ENCODE measurements at regions of chr3 and their contacts with region 1.

Region 1: DNA sequence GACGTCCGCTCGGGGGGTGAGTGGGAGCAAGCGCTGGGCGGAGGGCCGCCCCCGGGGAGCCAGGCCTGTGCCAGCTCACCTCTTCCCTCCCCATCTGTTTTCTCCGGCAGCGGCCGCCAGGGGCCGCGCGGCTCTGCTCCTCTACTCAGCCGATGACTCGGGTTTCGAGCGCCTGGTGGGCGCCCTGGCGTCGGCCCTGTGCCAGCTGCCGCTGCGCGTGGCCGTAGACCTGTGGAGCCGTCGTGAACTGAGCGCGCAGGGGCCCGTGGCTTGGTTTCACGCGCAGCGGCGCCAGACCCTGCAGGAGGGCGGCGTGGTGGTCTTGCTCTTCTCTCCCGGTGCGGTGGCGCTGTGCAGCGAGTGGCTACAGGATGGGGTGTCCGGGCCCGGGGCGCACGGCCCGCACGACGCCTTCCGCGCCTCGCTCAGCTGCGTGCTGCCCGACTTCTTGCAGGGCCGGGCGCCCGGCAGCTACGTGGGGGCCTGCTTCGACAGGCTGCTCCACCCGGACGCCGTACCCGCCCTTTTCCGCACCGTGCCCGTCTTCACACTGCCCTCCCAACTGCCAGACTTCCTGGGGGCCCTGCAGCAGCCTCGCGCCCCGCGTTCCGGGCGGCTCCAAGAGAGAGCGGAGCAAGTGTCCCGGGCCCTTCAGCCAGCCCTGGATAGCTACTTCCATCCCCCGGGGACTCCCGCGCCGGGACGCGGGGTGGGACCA is 632 bp upstream of the CRELD1 start:
- DNase-seq: peak; percentile 88
- CTCF ChIP-seq: peak; percentile 83

Region 2: GRCh38 chr3:9915254-9916141 is 17.5 kb before region 1 on chr3:
- CTCF ChIA-PET with region 1: interaction called, 43 read pairs
- POLR2A ChIA-PET with region 1: interaction called, 3 read pairs
- DNase-seq: no peak
- CTCF ChIP-seq: peak; percentile 45

Region 3: GRCh38 chr3:9951962-9952805 is 19.2 kb after region 1 on chr3 and contains the start of gene PRRT3:
- CTCF ChIA-PET with region 1: interaction called, 33 read pairs
- POLR2A ChIA-PET with region 1: interaction called, 14 read pairs
- DNase-seq: peak; percentile 83
- CTCF ChIP-seq: no peak

Region 4: DNA sequence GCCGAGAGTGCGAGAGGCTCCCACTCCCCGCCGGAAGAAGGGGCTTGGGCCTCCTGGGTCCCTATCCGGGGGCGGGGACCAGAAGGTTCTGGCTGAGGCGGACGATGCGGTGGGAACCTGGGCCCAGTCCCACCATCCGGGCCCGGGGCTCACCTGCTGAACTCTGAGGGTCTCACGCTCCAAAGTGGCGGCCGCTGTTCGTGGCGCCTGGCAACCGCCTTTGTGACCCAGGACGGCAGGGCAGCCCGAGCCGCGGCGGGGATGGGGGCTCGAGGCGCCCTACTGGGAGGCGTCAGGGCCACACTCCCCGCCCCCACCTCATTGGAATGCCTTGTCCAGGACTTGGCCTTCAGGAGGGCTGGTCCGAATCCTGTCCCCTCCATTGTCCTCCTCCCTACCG is 175.1 kb after region 1 on chr3 and contains the start of gene FANCD2OS:
- CTCF ChIA-PET with region 1: no interaction called
- POLR2A ChIA-PET with region 1: interaction called, 10 read pairs
- DNase-seq: no peak
- CTCF ChIP-seq: no peak

Region 5: DNA sequence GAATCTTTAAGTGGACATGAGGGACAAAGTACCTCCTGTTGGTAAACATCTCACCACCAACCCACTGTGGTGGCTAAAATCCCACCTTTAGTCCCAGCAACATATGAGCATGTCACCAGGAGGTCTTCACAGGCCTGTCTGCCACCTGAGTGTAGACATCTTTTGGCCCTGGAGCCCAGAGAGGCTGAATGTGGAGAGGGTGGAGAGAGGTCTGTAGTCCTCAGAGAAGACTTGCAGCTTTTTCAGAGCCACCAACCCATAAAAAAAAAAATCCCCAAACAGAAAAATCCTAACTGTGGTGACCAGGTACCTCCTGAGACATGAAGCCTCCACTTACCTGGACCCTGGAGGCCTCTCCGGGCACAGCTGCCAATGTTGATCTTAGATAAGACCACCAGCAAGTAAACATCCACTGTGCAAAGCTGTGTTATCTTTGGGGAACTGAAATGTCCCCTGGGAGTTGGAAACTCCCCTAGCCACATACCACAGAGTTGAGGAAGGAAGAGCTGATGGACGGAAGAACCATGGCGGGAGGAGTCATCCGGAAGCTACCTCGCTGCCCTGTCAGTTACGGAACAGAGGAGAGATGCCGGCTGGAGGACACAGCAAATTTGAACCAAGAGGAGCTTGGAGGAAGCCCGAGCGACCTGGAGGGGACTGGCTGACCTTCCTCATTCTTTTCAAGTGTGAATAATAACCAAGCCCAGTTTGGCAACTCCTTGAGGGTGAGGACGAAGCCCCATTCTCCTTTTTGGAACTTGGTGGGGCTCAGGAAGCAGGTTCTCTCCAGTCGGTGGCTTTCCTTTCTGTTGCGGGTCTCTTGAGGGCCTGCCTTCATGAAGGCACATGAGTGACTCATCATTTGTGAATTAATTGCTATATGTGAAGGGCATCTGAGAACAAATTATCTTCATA is 359.8 kb after region 1 on chr3 and contains the start of gene GHRL:
- CTCF ChIA-PET with region 1: interaction called, 12 read pairs
- POLR2A ChIA-PET with region 1: no interaction called
- DNase-seq: peak; percentile 74
- CTCF ChIP-seq: no peak

Measured in GM10248 (cell line).